ENCODE measurements at regions of chr1 and their contacts with region 1.

Region 1: GRCh38 chr1:153566440-153567379 is 1.1 kb upstream of the S100A2 start:
- DNase-seq: peak; percentile 95
- H3K4me3 Mint-ChIP-seq: peak overlapping the region; percentile 64
- H3K27ac Mint-ChIP-seq: peak overlapping the region; percentile 97
- H3K4me1 Mint-ChIP-seq: peaks cover 53% of the 10 kb centered on the region
- H3K27me3 Mint-ChIP-seq: peaks cover 1% of the 10 kb centered on the region

Region 2: DNA sequence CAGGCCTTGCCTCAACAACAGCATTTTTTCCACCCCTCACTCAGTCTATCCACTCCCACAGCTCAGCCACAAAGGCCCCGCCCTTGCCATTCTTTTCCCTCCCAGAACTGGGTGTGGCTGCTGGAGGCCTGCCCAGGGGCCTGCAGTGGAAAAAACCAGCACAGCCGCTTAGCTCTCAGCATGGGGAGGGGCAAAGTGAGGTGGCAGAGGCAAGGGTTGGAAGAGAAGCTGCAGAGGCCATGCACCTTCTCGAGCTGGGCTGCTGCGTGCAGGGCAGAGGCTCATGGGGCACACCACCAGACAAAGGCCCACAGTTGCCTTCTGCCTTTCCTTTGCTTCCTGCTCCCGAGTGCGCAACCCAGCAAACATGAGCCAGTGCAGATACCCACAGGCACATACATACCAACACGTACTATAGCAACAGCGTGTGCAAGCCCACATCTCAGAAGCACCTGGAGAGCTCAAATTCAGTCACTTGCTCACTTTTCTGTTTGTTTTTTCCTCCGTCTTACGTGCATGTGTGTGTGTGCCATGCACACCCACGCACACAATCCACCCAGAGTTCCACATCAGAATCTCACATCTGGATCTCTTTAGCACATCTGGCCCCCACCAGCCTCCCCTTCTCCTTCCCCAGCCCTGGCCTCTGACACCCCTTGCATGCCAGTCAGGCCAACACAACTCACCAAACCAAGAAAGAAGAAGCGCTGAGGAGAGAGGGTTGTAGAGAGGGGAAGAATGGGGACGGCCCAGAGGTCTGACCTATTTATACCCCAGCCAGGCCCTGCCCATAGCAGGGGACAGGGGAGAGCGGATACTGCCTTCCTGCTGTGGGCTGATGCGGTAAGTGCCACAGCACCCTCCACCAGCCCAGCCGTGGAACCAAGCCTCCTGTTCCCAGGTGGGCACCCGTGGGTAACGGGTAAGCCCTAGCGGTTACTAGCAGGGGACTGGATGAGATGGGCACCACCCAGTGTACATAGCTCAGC is 21.3 kb before region 1 on chr1 and contains the start of gene S100A4:
- CTCF ChIA-PET with region 1: interaction called, 49 read pairs
- POLR2A ChIA-PET with region 1: interaction called, 50 read pairs
- intact Hi-C with region 1: loop called (anchors 1 kb)
- DNase-seq: peak; percentile 98
- H3K4me3 Mint-ChIP-seq: peak within 1 kb of the TSS; percentile 92
- H3K27ac Mint-ChIP-seq: peak within 1 kb of the TSS; percentile 99
- H3K4me1 Mint-ChIP-seq: peaks cover 74% of the 10 kb centered on the region
- H3K27me3 Mint-ChIP-seq: no peaks in the 10 kb centered on the region
- total RNA-seq, gene S100A4: 352 to 382 TPM

Region 3: GRCh38 chr1:153816283-153816889 is 249.7 kb after region 1 on chr1:
- CTCF ChIA-PET with region 1: no interaction called
- POLR2A ChIA-PET with region 1: no interaction called
- intact Hi-C with region 1: no loop called
- DNase-seq: no peak
- H3K4me3 Mint-ChIP-seq: no peak overlapping the region
- H3K27ac Mint-ChIP-seq: no peak overlapping the region
- H3K4me1 Mint-ChIP-seq: no peaks in the 10 kb centered on the region
- H3K27me3 Mint-ChIP-seq: no peaks in the 10 kb centered on the region